ENCODE measurements at regions of chr6 and their contacts with region 1.

Region 1: DNA sequence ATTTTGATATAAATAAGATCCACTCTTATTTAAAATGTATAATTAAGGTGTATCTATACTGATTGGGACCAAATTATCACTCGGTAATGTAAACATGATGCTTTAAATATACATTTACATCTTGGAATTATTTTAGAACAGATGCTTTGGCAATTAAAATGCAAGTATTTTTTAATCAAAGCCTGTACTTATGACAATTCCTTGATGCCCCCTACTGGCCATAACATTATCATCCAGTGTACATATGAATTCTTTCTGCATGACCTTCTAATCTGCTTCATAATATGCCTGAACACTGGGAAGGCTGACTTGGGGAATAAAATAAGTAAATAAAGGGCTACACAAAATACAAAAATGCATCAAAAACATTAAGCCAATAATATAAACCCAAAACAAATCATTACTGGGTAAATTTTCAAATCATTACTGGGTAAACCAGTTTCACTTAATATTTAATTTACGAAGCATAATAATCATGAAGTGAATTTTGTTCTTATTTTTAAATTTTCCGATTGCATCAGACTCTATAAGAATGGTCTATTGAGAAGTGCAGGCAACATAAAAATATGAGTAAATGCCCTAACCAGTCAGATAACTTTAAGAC is 65.1 kb downstream of the CGA start:
- DNase-seq: no peak
- H3K4me3 ChIP-seq: no peak overlapping the region
- H3K27ac ChIP-seq: no peak overlapping the region
- H3K4me1 ChIP-seq: no peaks in the 10 kb centered on the region
- H3K27me3 ChIP-seq: no peaks in the 10 kb centered on the region
- CTCF ChIP-seq: peak in 1 of 3 experiments; percentile 11
- POLR2A ChIP-seq: no peak

Region 2: GRCh38 chr6:86511962-86512361 is 517.9 kb before region 1 on chr6:
- intact Hi-C with region 1: loop called (anchors 5 kb)
- DNase-seq: no peak
- H3K4me3 ChIP-seq: no peak overlapping the region
- H3K27ac ChIP-seq: no peak overlapping the region
- H3K4me1 ChIP-seq: no peaks in the 10 kb centered on the region
- H3K27me3 ChIP-seq: no peaks in the 10 kb centered on the region
- CTCF ChIP-seq: no peak
- POLR2A ChIP-seq: no peak

Measured in vagina (tissue), 2 donors.